Right cardiac atrium (tissue), 5 donors: ENCODE measurements at regions of chr2 and their contacts with region 1.

Region 1: DNA sequence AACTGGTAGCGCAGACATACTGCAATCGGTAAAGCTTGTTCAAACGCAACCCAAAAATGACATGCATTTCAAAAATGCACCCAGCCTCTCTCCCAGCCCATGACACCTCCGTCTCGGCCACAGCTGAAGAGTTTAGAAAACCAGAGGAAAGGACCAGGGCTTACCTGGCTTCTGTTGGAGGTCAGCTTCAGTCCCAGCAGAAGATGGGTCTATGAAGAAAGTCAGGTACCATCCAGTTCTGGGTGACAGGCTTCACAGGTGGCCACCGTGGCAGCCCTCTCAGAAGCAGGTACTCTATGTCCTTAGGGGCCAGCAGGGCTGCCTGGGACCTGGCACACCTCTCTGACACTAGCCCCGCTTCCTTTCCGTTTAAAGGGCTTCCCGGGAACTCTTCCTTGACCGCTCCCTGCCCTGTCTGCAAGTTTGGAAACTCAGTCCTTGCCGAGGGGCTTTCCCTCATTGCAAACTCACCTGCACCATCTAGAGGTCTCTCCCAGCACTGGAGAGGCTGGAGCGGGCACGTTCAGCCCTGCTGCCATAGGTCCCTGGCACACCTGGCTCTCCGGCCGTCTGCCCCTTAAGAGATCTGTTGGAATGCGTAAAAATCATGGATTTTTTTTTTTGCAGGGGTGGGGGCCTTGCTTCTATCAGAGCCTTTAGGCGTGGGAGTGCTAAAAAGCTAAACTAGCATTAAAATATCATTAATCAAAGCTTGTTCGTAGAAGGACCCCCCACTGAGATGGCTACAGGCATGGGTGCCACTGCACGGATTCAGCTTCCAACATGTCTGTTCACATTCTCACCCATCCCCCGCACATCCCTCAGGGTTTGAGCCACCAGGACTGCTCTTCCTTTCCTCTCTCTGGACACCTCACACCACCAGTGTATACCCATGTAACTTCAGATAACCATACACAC is at the start of gene EDAR:
- DNase-seq: peak in 1 of 3 donors; percentile 45
- ATAC-seq: peak; percentile 81 to 89
- H3K4me3 ChIP-seq: no peak within 1 kb of the TSS
- H3K27ac ChIP-seq: no peak within 1 kb of the TSS
- H3K4me1 ChIP-seq: no peaks in the 10 kb centered on the region
- H3K27me3 ChIP-seq: no peaks in the 10 kb centered on the region
- total RNA-seq, gene EDAR: 0.09 TPM in 1 of 4 donors, not detected in the others

Region 2: GRCh38 chr2:108855194-108855593 is 133.9 kb before region 1 on chr2:
- intact Hi-C with region 1: loop called in 3 of 4 experiments (anchors 5 to 10 kb)
- DNase-seq: no peak
- ATAC-seq: no peak
- H3K4me3 ChIP-seq: no peak overlapping the region
- H3K27ac ChIP-seq: no peak overlapping the region
- H3K4me1 ChIP-seq: no peaks in the 10 kb centered on the region
- H3K27me3 ChIP-seq: no peaks in the 10 kb centered on the region

Region 3: GRCh38 chr2:108898315-108899082 is 90.6 kb before region 1 on chr2:
- intact Hi-C with region 1: no loop called
- DNase-seq: no peak
- ATAC-seq: no peak
- H3K4me3 ChIP-seq: no peak overlapping the region
- H3K27ac ChIP-seq: no peak overlapping the region
- H3K4me1 ChIP-seq: no peaks in the 10 kb centered on the region
- H3K27me3 ChIP-seq: no peaks in the 10 kb centered on the region

Region 4: DNA sequence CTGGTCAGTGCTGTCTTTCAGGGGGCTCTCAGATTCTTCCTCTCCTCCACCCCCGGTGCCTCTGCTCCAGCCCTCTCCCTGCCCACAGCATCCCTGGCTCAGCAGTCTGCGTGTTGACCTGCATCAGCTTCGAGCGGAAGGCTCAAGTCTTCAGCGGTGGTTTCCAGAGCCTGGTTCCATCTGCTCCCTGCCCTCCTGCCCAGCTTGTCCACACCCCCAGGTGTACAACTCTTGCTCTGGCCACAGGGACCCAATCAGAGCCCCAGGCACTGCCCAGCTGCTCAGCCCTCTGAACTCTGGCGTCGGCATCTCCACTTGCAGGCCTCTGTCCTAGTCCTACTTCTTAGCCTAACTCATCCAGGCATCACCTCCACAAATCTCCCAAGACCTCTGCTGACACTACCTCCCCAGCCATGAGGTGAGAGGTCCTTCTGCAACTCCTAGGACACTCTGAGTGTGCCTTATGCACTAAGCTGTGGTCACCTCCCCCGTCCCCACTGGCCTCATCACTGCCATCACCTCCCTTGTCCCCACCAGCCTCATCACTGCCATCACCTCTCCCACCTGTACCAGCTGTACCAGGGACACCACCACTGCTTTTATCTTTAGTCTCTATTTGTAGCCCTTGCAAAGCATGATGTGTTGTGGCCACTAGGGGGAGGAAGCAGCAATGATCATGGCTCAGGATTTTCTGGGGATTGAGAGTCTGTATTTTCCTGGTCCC is 61.0 kb before region 1 on chr2:
- intact Hi-C with region 1: loop called in 1 of 4 experiments (anchors 5 kb)
- DNase-seq: no peak
- ATAC-seq: peak; percentile 34 to 36
- H3K4me3 ChIP-seq: no peak overlapping the region
- H3K27ac ChIP-seq: no peak overlapping the region
- H3K4me1 ChIP-seq: no peaks in the 10 kb centered on the region
- H3K27me3 ChIP-seq: no peaks in the 10 kb centered on the region